Body of pancreas (tissue), 4 donors: ENCODE measurements at regions of chr7 and their contacts with region 1.

Region 1: DNA sequence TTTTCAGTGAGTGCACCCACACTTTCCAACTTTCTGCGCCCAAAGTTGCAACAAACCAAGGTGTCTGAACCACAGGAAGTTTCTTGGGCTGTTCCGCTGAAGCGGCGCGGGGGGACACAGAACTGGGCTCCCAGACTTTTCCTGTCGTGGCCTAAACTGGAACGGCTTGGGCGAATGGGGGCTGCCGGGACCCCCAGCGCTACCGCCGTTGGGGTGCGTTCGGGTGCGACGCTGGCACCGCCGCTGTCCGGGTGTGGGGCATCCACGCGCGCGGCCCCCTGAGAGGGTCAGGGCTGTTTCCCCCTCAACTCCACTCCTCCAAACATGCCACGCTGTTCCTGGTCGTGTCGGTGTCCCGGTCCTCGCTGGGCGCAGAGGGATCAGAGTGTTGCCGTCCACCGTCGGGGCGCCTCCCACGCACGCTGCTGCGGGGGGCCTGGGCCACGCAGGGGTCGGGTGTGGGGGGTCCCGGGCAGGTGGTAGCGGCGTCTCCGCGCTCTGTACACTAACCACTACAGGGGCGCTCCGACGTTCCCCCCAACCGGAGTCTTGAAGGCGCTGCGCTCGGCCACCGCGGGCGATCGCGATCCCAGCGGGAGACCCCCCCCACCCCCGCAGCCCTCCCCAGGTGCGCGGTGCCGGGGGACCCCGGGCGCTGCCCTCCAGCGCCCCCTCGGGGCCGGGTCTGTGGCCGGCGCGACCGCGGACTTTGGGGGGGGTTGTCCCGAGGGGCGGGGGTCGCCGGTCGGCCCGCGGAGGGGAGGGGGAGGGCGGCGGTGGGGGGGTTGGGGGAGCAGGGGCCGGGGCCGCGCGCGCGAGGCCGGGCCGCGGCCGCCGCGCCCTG is 2.2 kb upstream of the CUX1 start:
- DNase-seq: peak; percentile 41 to 72 (median 60)
- ATAC-seq: peak; percentile 59
- H3K4me3 ChIP-seq: peak overlapping the region; percentile 50 to 67
- H3K27ac ChIP-seq: peak overlapping the region; percentile 77 to 83 (median 82)
- H3K4me1 ChIP-seq: peaks cover 20% of the 10 kb centered on the region
- H3K27me3 ChIP-seq: no peaks in the 10 kb centered on the region
- CTCF ChIP-seq: peak in 4 of 7 experiments; percentile 42 to 61 (median 44)
- POLR2A ChIP-seq: peak in 1 of 3 donors; percentile 9

Region 2: DNA sequence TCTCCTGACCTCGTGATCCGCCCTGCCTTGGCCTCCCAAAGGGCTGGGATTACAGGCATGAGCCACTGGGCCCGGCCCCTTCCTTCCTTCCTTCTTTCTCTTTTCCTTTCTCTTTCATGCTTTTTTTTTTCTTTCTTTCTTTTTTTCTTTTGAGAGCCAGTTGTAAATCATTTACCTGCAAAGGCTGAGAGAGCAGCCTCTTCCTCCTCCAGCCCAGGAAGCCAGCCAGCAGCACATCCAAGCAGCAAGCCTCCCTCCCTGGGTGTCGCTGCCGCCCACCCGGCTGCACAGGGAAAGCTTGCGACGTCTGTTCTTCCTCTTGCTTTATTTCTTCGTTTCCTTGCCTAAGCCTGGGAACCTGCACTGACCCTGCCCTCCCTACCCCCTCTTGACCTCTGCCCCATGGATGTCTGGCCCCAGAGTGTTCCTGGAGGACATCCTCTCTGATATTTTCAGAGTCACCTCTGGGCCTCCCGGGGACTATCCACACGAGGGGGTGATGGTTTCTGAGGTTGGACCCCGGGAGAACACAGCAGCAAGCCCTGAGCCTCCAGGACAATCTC is 123.3 kb before region 1 on chr7:
- intact Hi-C with region 1: loop called (anchors 5 kb)
- DNase-seq: peak in 3 of 4 donors; percentile 27 to 41 (median 33)
- ATAC-seq: no peak
- H3K4me3 ChIP-seq: no peak overlapping the region
- H3K27ac ChIP-seq: peak overlapping the region in 2 of 4 donors; percentile 21 to 45
- H3K4me1 ChIP-seq: peaks cover 12% of the 10 kb centered on the region
- H3K27me3 ChIP-seq: no peaks in the 10 kb centered on the region
- CTCF ChIP-seq: no peak
- POLR2A ChIP-seq: no peak

Region 3: GRCh38 chr7:101924171-101924570 is 109.0 kb after region 1 on chr7:
- intact Hi-C with region 1: no loop called
- DNase-seq: no peak
- ATAC-seq: no peak
- H3K4me3 ChIP-seq: no peak overlapping the region
- H3K27ac ChIP-seq: no peak overlapping the region
- H3K4me1 ChIP-seq: peaks cover 21% of the 10 kb centered on the region
- H3K27me3 ChIP-seq: no peaks in the 10 kb centered on the region
- CTCF ChIP-seq: no peak
- POLR2A ChIP-seq: no peak